ENCODE measurements at regions of chr20 and their contacts with region 1.

Region 1: GRCh38 chr20:9071976-9072726 is 3.3 kb downstream of the PLCB4 start:
- DNase-seq: no peak
- ATAC-seq: no peak

Region 2: DNA sequence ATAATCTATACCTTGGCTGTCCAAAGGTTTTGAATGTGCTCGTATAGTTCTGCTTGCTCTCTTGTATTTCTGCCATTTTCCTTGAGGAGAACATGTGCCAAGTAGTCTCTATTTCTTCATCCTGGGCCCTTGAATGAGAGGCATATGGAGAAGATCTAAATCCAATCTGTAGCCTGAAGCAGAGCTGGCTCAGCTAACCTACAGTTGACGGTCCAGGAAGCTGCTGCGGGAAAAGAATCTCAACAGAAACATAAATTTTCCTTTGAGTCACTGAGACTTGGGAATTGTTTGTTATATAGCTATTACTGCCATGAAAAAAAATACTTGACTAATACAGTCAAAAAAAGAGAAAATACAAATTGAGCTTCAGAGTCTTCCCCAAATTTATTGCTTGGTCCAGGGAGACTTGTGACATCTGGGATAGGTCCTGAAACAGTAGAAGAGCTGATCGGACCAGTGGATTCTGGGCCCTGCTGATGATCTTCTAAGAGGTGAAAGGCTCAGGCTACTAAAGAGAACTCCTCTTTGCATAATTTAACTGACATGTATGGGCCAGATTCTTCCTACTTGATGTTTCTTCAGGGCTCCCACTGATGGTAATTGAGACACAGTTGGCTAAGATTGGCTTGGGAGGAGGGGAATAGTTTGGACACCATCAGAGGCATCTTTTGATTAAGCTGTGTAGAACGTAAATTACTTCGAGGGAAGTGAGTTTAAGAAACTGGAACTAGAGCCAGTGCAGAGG is 33.2 kb before region 1 on chr20:
- intact Hi-C with region 1: loop called (anchors 2 kb)
- DNase-seq: no peak
- ATAC-seq: no peak

Region 3: GRCh38 chr20:9112541-9113515 is 40.7 kb after region 1 on chr20:
- intact Hi-C with region 1: no loop called
- DNase-seq: no peak
- ATAC-seq: no peak

Measured in sciatic nerve (tissue), 2 donors.